Naive thymus-derived CD4-positive, alpha-beta T cell (primary cell): ENCODE measurements at regions of chr10 and their contacts with region 1.

Region 1: GRCh38 chr10:100185364-100186252 is at the start of gene ERLIN1:
- DNase-seq: peak; percentile 86 to 97 (median 91)
- ATAC-seq: peak; percentile 96
- H3K4me3 ChIP-seq: peak within 1 kb of the TSS; percentile 96
- H3K4me3 Mint-ChIP-seq: peak within 1 kb of the TSS; percentile 93 to 100 (median 96)
- H3K27ac ChIP-seq: peak within 1 kb of the TSS; percentile 84
- H3K27ac Mint-ChIP-seq: peak within 1 kb of the TSS; percentile 89 to 97 (median 95)
- H3K4me1 ChIP-seq: peaks cover 15 to 17% of the 10 kb centered on the region in 2 donors
- H3K4me1 Mint-ChIP-seq: peaks cover 40 to 79% (median 62%) of the 10 kb centered on the region in 7 donors
- H3K27me3 ChIP-seq: no peaks in the 10 kb centered on the region
- H3K27me3 Mint-ChIP-seq: no peaks in the 10 kb centered on the region
- total RNA-seq, gene ERLIN1: 3.9 to 17.0 (median 12.4) TPM

Region 2: DNA sequence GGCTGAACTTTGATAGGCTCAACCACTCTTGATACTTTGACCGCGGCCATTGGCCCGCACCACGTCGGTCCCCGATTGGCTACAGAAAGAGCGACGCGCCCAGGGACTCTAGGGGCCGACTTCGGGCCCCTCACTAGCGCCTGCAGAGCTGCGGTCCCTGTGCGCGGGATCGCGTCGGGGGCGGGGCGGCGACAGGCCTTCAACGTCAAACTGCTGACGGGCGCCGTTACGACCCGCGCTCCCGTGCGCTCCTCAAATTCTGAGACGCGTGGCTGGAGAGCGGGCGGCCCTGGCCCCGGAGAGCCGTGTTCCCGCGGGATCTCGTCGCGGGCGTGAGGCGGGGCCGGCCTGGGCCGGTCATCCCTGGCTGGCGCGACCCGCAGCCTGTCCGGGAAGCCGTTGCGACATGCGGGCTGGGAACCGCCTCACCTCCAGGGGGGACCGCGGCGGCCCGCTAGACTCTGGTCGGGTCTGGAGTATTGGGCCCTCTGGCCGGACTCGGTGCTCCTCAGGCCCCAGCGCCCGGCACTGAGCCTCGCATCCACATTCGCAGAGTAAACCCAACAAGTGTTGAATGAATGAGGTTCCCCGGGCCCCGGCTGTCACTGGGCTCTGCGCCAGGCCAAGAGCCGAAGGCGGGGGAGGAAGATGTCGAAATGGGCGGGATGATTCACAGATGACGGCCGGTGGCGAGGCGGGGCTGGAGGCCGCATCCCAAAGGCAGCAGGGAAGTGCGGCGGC is 564.7 kb before region 1 on chr10:
- CTCF ChIA-PET with region 1: no interaction called
- POLR2A ChIA-PET with region 1: no interaction called
- intact Hi-C with region 1: loop called in 1 of 2 experiments (anchors 1 kb)
- DNase-seq: peak in 7 of 9 donors; percentile 66 to 86 (median 73)
- ATAC-seq: peak; percentile 89
- H3K4me3 ChIP-seq: peak overlapping the region; percentile 85
- H3K4me3 Mint-ChIP-seq: peak overlapping the region; percentile 83 to 93 (median 88)
- H3K27ac ChIP-seq: peak overlapping the region; percentile 99
- H3K27ac Mint-ChIP-seq: peak overlapping the region; percentile 75 to 98 (median 94)
- H3K4me1 ChIP-seq: peaks cover 20 to 29% of the 10 kb centered on the region in 2 donors
- H3K4me1 Mint-ChIP-seq: peaks cover 27 to 53% (median 45%) of the 10 kb centered on the region in 7 donors
- H3K27me3 ChIP-seq: no peaks in the 10 kb centered on the region
- H3K27me3 Mint-ChIP-seq: no peaks in the 10 kb centered on the region

Region 3: DNA sequence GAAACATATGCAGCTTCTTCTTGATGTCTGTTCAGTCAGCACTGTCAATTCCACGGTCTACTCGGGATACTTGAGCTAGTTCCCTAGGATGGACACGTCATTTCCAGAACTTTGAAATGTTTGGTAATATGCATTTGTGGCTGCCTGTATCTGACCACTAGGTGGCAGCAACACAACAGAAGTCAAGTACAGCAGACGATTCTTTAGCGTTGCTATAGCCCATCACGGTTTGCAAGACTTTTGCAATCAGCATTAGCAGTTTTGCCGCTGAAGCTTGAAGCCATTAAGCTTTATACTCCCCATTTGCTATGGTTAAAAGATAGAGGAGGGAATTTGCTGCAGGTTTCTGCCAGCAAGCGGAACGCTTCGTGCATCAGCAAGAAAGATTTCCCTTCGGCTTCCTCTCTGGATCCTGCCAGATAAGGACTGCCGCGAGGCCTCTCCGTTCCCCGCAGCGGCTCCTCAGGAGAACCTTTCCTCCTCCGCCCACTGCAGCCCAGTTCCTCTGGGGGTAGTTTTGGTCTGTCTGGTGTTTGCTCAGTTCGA is 339.7 kb before region 1 on chr10:
- CTCF ChIA-PET with region 1: no interaction called
- POLR2A ChIA-PET with region 1: no interaction called
- intact Hi-C with region 1: loop called in 1 of 2 experiments (anchors 5 kb)
- DNase-seq: peak; percentile 22 to 78 (median 71)
- ATAC-seq: peak; percentile 94
- H3K4me3 ChIP-seq: no peak overlapping the region
- H3K4me3 Mint-ChIP-seq: peak overlapping the region in 9 of 10 donors; percentile 39 to 59 (median 50)
- H3K27ac ChIP-seq: no peak overlapping the region
- H3K27ac Mint-ChIP-seq: no peak overlapping the region
- H3K4me1 ChIP-seq: peaks cover 0 to 5% of the 10 kb centered on the region in 2 donors
- H3K4me1 Mint-ChIP-seq: peaks cover 0 to 8% (median 5%) of the 10 kb centered on the region in 7 donors
- H3K27me3 ChIP-seq: no peaks in the 10 kb centered on the region
- H3K27me3 Mint-ChIP-seq: peaks cover 0 to 3% (median 0%) of the 10 kb centered on the region in 5 donors

Region 4: DNA sequence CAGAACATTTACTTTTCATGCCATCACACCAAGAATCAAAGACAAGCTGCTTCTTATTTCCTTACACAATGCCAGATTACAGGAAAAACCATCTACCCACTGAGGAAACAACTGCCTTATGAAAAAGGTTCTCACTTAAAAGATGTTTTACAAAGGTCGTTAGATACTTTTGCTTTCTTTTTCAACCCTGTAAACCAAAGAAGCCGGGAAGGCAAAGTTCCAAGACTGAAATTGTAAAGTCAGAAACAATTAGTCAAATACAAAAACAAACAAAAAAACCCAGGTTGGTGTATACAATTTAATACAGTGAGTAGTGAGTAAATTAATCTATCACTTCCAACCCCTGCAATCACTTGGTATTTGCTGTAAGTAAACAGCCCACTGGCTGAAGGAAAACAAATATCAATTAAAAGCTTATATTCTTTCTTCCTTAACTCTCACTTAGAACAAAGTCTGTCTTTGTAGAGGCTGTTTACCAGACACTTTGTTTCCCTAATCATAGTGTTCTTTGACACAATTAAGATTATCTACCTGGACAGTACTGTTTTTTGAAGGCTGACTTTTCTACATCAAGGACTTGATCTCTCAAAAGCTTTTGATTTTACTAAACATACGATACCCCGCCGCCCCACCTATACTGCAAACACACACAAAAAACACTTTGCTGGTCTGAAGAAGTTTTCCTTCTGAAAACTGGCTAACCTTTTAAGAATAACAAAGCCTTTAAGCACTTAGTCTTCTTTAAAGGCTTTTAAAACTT is 17.9 kb before region 1 on chr10:
- CTCF ChIA-PET with region 1: no interaction called
- POLR2A ChIA-PET with region 1: no interaction called
- intact Hi-C with region 1: loop called in 1 of 2 experiments (anchors 2 kb)
- DNase-seq: no peak
- ATAC-seq: no peak
- H3K4me3 ChIP-seq: peak overlapping the region; percentile 32
- H3K4me3 Mint-ChIP-seq: peak overlapping the region in 9 of 10 donors; percentile 63 to 84 (median 70)
- H3K27ac ChIP-seq: peak overlapping the region; percentile 58
- H3K27ac Mint-ChIP-seq: peak overlapping the region; percentile 61 to 90 (median 80)
- H3K4me1 ChIP-seq: peaks cover 4 to 6% of the 10 kb centered on the region in 2 donors
- H3K4me1 Mint-ChIP-seq: peaks cover 18 to 46% (median 34%) of the 10 kb centered on the region in 7 donors
- H3K27me3 ChIP-seq: no peaks in the 10 kb centered on the region
- H3K27me3 Mint-ChIP-seq: no peaks in the 10 kb centered on the region

Region 5: GRCh38 chr10:100267237-100268104 is 81.9 kb after region 1 on chr10 and contains the start of gene CWF19L1:
- CTCF ChIA-PET with region 1: no interaction called
- POLR2A ChIA-PET with region 1: no interaction called
- intact Hi-C with region 1: loop called (anchors 1 to 5 kb)
- DNase-seq: peak; percentile 39 to 74 (median 64)
- ATAC-seq: peak; percentile 91
- H3K4me3 ChIP-seq: peak within 1 kb of the TSS; percentile 93
- H3K4me3 Mint-ChIP-seq: peak within 1 kb of the TSS; percentile 89 to 100 (median 100)
- H3K27ac ChIP-seq: peak within 1 kb of the TSS; percentile 96
- H3K27ac Mint-ChIP-seq: peak within 1 kb of the TSS; percentile 95 to 100 (median 99)
- H3K4me1 ChIP-seq: peaks cover 12 to 21% of the 10 kb centered on the region in 2 donors
- H3K4me1 Mint-ChIP-seq: peaks cover 17 to 40% (median 27%) of the 10 kb centered on the region in 7 donors
- H3K27me3 ChIP-seq: no peaks in the 10 kb centered on the region
- H3K27me3 Mint-ChIP-seq: no peaks in the 10 kb centered on the region
- total RNA-seq, gene CWF19L1: 41.8 to 46.8 (median 42.6) TPM

Region 6: GRCh38 chr10:100373298-100374136 is 187.9 kb after region 1 on chr10:
- CTCF ChIA-PET with region 1: no interaction called
- POLR2A ChIA-PET with region 1: no interaction called
- intact Hi-C with region 1: loop called in 1 of 2 experiments (anchors 5 kb)
- DNase-seq: peak; percentile 52 to 91 (median 72)
- ATAC-seq: peak; percentile 89
- H3K4me3 ChIP-seq: peak overlapping the region; percentile 96
- H3K4me3 Mint-ChIP-seq: no peak overlapping the region
- H3K27ac ChIP-seq: peak overlapping the region; percentile 85
- H3K27ac Mint-ChIP-seq: no peak overlapping the region
- H3K4me1 ChIP-seq: peaks cover 32 to 41% of the 10 kb centered on the region in 2 donors
- H3K4me1 Mint-ChIP-seq: peaks cover 14 to 39% (median 27%) of the 10 kb centered on the region in 7 donors
- H3K27me3 ChIP-seq: no peaks in the 10 kb centered on the region
- H3K27me3 Mint-ChIP-seq: no peaks in the 10 kb centered on the region

Region 7: DNA sequence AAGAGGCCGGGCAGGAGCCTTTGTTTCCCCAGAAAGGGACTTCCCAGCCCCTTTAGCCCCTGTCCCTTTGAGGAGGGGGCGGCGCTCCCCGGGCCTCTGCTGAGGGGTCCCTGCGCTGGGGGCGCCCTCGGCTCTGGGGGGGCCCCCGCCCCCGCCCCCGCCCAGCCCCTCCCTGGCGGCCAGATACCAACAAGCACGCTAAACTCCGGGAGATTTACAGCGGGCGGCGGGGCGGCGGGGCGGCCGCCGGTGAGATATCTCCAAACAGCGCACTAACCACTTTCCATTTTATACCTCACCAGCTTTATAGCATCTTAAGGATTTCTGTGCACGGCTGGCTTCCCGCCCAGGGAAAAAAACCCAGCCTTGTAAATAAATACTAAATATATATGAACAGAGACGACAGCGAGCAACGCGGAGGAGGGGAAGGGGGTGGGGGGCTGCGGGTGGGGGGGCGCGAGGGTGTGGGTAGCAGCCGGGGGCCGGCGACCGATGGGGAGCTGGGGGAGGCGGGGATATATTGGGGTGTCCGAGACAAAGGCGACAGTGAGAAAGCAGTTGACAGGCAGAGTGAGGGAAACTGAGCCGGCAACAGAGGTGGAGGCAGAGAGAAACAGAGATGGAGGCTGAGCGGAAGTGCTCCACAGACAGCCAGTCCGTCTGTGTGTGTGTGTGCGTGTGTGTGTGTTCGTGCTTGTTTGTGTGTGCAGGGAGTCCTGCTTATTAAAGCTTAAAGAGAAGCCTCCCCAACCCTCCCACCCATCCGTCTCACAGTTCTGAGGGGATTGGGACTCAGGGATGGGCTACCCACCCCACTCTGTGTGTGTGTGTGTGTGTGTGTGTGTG is 436.0 kb after region 1 on chr10:
- CTCF ChIA-PET with region 1: no interaction called
- POLR2A ChIA-PET with region 1: no interaction called
- intact Hi-C with region 1: no loop called
- DNase-seq: peak in 7 of 9 donors; percentile 18 to 64 (median 50)
- ATAC-seq: peak; percentile 58
- H3K4me3 ChIP-seq: no peak overlapping the region
- H3K4me3 Mint-ChIP-seq: peak overlapping the region in 9 of 10 donors; percentile 36 to 74 (median 66)
- H3K27ac ChIP-seq: no peak overlapping the region
- H3K27ac Mint-ChIP-seq: peak overlapping the region in 1 of 9 donors; percentile 66
- H3K4me1 ChIP-seq: no peaks in the 10 kb centered on the region
- H3K4me1 Mint-ChIP-seq: peaks cover 0 to 6% (median 0%) of the 10 kb centered on the region in 7 donors
- H3K27me3 ChIP-seq: peaks cover 0 to 10% of the 10 kb centered on the region in 2 donors
- H3K27me3 Mint-ChIP-seq: peaks cover 65 to 76% (median 68%) of the 10 kb centered on the region in 5 donors

Region 8: DNA sequence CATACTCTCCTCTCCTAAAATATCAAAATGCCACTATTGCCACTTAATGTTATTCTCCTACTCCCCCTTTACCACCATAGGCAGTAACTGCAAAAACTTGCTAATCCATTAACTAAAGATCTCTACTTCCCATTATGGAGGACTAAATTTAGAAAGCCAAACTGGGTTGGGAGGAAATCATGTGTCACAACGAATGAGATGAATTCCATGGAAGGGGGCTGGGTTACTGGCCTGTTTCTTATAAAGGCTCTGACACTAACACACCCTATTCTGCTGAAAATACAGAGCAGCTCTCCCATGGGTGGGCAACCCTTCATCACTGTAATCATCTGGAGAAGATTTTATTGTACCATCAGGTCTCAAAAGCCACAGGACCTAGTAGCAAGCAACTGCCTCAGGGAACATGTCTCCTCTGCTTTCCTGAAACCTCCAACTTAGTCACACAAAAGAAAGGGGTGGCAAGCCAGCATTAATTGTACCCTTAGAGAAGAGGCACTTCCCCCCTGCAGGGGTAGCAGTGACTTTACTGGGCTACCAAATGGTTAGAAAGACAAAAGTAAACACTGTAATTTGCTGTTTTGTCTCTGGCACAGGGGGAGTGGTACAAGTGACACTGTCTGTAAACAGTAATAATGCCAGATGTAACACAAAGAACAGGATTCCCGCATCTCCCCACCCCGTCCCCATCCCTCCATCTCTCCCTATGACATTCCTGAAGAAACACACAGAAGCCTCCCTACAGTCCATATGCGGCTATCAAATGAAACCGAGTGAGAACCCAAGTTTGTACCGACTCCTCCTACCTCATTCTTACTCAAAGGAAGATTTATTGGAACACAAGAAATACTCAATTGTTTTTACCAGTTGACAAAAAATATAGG is 1788.7 kb after region 1 on chr10:
- CTCF ChIA-PET with region 1: no interaction called
- POLR2A ChIA-PET with region 1: no interaction called
- intact Hi-C with region 1: no loop called
- DNase-seq: no peak
- ATAC-seq: no peak
- H3K4me3 ChIP-seq: no peak overlapping the region
- H3K4me3 Mint-ChIP-seq: peak overlapping the region in 9 of 10 donors; percentile 43 to 88 (median 68)
- H3K27ac ChIP-seq: peak overlapping the region; percentile 11
- H3K27ac Mint-ChIP-seq: peak overlapping the region; percentile 31 to 94 (median 73)
- H3K4me1 ChIP-seq: peaks cover 9 to 16% of the 10 kb centered on the region in 2 donors
- H3K4me1 Mint-ChIP-seq: peaks cover 20 to 36% (median 28%) of the 10 kb centered on the region in 7 donors
- H3K27me3 ChIP-seq: no peaks in the 10 kb centered on the region
- H3K27me3 Mint-ChIP-seq: no peaks in the 10 kb centered on the region